ENCODE measurements at regions of chr1 and their contacts with region 1.

Region 1: GRCh38 chr1:3856908-3857790 is at the starts of genes CEP104 and DFFB:
- DNase-seq: peak; percentile 97
- H3K4me3 Mint-ChIP-seq: peak within 1 kb of the TSS; percentile 95
- H3K27ac Mint-ChIP-seq: peak within 1 kb of the TSS; percentile 82
- H3K4me1 Mint-ChIP-seq: peaks cover 29% of the 10 kb centered on the region
- H3K27me3 Mint-ChIP-seq: no peaks in the 10 kb centered on the region
- total RNA-seq, gene CEP104: 25.4 to 27.3 TPM
- total RNA-seq, gene DFFB: 6.3 to 6.5 TPM

Region 2: DNA sequence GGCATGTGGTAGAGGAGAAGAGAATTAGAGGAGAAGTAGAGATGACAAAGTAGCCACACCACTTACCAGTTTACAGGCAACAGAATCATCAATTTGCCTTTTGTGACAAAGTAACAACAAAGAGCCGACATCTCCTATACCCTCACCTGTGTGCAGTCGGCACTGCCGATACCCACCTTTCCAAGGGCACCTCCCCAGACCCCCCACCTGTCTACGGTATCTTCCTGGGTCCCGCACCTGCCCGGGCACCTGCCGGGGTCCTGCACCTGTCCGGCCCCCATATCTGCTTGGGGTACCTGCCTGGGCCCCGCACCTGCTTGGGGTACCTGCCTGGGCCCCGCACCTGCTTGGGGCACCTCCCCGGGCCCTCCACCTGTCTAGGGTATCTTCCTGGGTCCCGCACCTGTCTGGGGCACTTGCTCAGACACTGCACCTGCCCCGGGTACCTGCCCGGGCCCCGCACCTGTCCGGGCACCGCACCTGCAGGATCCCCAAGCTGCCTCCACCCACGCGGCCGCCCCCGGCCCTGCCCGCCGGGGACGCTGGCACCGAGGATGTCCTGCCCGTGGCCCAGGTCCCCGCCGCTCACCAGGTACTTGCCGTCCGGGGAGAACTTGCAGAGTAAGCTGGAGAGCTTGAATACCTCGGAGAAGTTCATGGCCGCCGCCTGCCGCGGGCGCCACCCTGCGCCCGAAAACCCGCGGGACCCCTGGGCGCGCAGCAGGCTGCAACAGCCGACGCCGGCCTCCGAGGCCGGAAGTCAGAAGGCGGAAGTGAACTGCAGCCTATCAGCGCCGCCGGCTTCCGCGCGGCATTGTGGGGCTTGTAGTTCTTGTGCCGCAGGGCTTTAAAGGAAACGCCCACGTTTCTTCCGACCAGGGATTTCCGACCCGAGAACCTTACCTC is 207.6 kb before region 1 on chr1 and contains the start of gene WRAP73:
- CTCF ChIA-PET with region 1: no interaction called
- intact Hi-C with region 1: loop called (anchors 1 kb)
- DNase-seq: peak; percentile 95
- H3K4me3 Mint-ChIP-seq: peak within 1 kb of the TSS; percentile 76
- H3K27ac Mint-ChIP-seq: no peak within 1 kb of the TSS
- H3K4me1 Mint-ChIP-seq: peaks cover 22% of the 10 kb centered on the region
- H3K27me3 Mint-ChIP-seq: peaks cover 24% of the 10 kb centered on the region
- total RNA-seq, gene WRAP73: 32.4 to 35.4 TPM

Region 3: DNA sequence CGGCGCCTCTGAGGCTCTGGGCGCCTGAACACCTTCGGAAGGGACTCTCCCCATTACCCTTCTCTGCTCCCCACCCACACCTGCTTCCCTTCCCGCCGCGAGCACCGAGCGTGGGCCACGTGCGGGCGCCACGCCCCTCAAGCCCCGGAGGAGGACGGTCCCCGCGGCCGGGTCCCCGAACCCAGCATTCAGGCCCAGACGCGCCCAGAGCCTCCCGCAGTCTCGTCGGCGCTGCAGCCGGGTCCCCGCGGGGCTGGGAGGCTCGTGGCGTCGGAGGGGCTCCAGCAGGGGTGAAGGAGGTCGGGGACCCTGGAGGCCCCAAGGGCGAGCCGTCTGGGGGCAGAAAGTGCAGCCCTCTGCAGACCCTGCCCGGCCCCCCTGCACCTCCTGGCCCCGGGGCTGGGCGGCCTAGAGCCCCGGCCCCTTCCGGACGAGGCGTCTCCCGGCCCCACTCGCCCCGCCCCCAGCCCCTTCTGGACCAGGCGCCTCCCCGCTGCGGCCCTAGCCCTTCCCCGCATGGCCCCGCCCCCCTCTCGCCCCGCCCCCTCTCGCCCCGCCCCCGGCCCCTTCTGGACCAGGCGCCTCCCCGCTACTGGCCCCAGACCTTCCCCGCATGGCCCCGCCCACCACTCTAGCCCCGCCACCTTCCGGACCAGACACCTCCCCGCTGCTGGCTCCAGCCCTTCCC is 85.0 kb before region 1 on chr1:
- CTCF ChIA-PET with region 1: no interaction called
- intact Hi-C with region 1: loop called (anchors 1 kb)
- DNase-seq: peak; percentile 94
- H3K4me3 Mint-ChIP-seq: peak overlapping the region; percentile 65
- H3K27ac Mint-ChIP-seq: peak overlapping the region; percentile 8
- H3K4me1 Mint-ChIP-seq: peaks cover 12% of the 10 kb centered on the region
- H3K27me3 Mint-ChIP-seq: no peaks in the 10 kb centered on the region

Region 4: GRCh38 chr1:3785456-3786157 is 71.5 kb before region 1 on chr1:
- CTCF ChIA-PET with region 1: no interaction called
- intact Hi-C with region 1: no loop called
- DNase-seq: no peak
- H3K4me3 Mint-ChIP-seq: no peak overlapping the region
- H3K27ac Mint-ChIP-seq: no peak overlapping the region
- H3K4me1 Mint-ChIP-seq: peaks cover 10% of the 10 kb centered on the region
- H3K27me3 Mint-ChIP-seq: no peaks in the 10 kb centered on the region

Measured in activated naive CD4-positive, alpha-beta T cell treated with anti-CD3 and anti-CD28 coated beads for 36 hours (primary cell).